Natural killer cell (primary cell): ENCODE measurements at regions of chr9 and their contacts with region 1.

Region 1: DNA sequence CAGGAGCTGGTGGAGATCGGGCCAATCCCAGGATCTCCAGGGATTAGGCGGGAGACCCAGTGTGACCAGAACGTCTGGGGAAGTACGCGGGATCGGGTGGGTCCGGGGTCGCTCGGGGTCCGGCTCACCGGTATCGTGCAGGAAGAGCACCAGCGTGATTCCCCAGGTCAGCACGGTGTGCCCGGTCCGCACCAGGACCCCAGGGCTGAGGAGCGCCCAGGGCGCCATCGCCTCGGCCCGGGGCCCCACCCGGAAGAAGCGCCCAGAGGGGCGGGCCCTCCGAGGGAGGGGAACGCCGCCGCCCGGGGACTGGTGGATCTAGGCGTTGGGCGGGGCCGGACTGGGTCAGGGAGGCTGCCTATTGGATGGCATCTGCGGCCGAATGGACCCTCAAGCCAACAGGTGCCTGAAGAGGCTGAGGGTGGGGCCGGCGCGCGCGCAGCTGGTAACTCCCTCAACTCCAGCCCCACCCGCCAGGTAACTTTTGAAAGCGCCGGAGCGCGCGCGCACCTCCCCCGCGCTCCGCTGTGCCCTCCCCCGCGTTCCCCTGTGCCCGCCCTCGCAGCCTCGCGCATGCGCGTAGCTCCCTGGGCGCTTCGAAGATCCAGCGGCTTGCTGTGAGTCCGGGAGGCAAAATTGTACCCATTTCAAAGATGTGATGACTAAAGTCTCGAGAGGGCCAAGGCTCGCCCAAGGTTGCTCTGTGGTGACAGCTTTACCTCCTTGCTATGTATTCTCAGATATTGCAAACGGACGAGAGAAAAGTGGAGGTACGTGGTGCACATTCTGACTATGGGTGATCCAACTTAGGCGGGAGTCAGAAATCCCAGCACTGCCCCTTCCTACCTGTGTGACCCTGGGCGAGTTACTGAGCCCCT is at the start of gene ZDHHC12:
- DNase-seq: peak; percentile 97 to 99
- ATAC-seq: peak; percentile 95 to 99 (median 96)
- H3K4me3 ChIP-seq: peak within 1 kb of the TSS; percentile 75
- H3K4me3 Mint-ChIP-seq: peak within 1 kb of the TSS; percentile 93
- H3K27ac ChIP-seq: peak within 1 kb of the TSS; percentile 78
- H3K27ac Mint-ChIP-seq: peak within 1 kb of the TSS; percentile 86 to 94
- H3K4me1 ChIP-seq: peaks cover 25% of the 10 kb centered on the region
- H3K4me1 Mint-ChIP-seq: peaks cover 26 to 35% of the 10 kb centered on the region in 2 donors
- H3K27me3 ChIP-seq: no peaks in the 10 kb centered on the region
- H3K27me3 Mint-ChIP-seq: no peaks in the 10 kb centered on the region
- CTCF ChIP-seq: no peak
- total RNA-seq, gene ZDHHC12: 26.1 to 37.1 (median 28.6) TPM

Region 2: GRCh38 chr9:128656416-128657343 is 67.4 kb before region 1 on chr9 and contains the start of gene DYNC2I2:
- intact Hi-C with region 1: loop called (anchors 1 kb)
- DNase-seq: peak; percentile 92 to 99
- ATAC-seq: peak; percentile 96 to 97 (median 96)
- H3K4me3 ChIP-seq: peak within 1 kb of the TSS; percentile 54
- H3K4me3 Mint-ChIP-seq: peak within 1 kb of the TSS; percentile 92
- H3K27ac ChIP-seq: peak within 1 kb of the TSS; percentile 91
- H3K27ac Mint-ChIP-seq: peak within 1 kb of the TSS; percentile 97
- H3K4me1 ChIP-seq: peaks cover 14% of the 10 kb centered on the region
- H3K4me1 Mint-ChIP-seq: peaks cover 0 to 8% of the 10 kb centered on the region in 2 donors
- H3K27me3 ChIP-seq: no peaks in the 10 kb centered on the region
- H3K27me3 Mint-ChIP-seq: no peaks in the 10 kb centered on the region
- CTCF ChIP-seq: no peak
- total RNA-seq, gene DYNC2I2: 5.2 to 6.3 (median 5.5) TPM

Region 3: DNA sequence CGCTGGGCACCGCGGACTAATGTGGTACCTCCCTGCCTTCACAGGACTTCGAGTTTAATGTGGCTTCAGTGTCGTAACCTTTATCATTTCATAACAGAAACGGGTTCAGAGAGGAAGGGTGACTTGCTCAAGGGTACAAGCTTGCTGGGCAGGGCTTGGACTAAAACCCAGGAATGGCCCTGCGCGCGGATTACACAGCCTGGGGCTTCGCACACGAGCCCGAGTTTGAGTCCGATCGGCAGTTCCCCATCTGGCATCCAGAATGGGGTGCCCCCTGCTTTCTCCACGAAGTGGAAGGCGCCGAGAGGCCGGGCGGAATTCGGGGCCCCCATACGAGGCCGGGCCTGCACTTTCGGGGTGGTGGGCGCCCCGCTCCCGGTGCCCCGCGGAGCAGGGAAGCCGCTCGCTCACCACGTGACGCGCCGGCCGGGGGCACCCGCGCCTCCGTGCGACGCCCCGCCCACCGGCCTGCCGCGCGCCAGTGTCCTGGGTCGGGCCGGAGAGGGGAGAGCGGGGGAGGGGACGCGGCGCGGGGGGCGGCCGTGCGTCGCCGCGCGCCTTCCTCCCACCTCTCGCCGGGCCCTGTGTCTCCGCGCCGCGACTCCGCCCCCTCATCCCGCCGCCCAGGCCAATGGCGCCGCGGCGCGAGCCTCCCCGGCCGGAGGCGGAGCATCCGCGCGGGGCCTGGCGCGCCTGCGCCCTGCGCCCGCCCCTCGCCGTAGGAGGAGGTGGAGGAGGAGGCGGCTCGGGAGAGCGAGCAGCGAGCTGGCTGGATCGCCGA is 35.4 kb before region 1 on chr9 and contains the start of gene SET:
- intact Hi-C with region 1: loop called (anchors 1 kb)
- DNase-seq: peak; percentile 92 to 97
- ATAC-seq: peak; percentile 77 to 92 (median 84)
- H3K4me3 ChIP-seq: peak within 1 kb of the TSS; percentile 66
- H3K4me3 Mint-ChIP-seq: peak within 1 kb of the TSS; percentile 99
- H3K27ac ChIP-seq: peak within 1 kb of the TSS; percentile 97
- H3K27ac Mint-ChIP-seq: peak within 1 kb of the TSS; percentile 89 to 96
- H3K4me1 ChIP-seq: peaks cover 53% of the 10 kb centered on the region
- H3K4me1 Mint-ChIP-seq: peaks cover 62 to 70% of the 10 kb centered on the region in 2 donors
- H3K27me3 ChIP-seq: no peaks in the 10 kb centered on the region
- H3K27me3 Mint-ChIP-seq: no peaks in the 10 kb centered on the region
- CTCF ChIP-seq: no peak
- total RNA-seq, gene SET: 331 to 341 (median 334) TPM

Region 4: GRCh38 chr9:128771745-128772519 is 47.8 kb after region 1 on chr9 and contains the start of gene ZER1:
- intact Hi-C with region 1: loop called (anchors 5 kb)
- DNase-seq: peak; percentile 95 to 96
- ATAC-seq: peak; percentile 90 to 97 (median 93)
- H3K4me3 ChIP-seq: peak within 1 kb of the TSS; percentile 99
- H3K4me3 Mint-ChIP-seq: peak within 1 kb of the TSS; percentile 97
- H3K27ac ChIP-seq: peak within 1 kb of the TSS; percentile 95
- H3K27ac Mint-ChIP-seq: peak within 1 kb of the TSS; percentile 92 to 99
- H3K4me1 ChIP-seq: peaks cover 25% of the 10 kb centered on the region
- H3K4me1 Mint-ChIP-seq: peaks cover 28 to 34% of the 10 kb centered on the region in 2 donors
- H3K27me3 ChIP-seq: no peaks in the 10 kb centered on the region
- H3K27me3 Mint-ChIP-seq: peaks cover 0 to 5% of the 10 kb centered on the region in 2 donors
- CTCF ChIP-seq: no peak
- total RNA-seq, gene ZER1: 35.0 to 37.4 (median 35.2) TPM

Region 5: DNA sequence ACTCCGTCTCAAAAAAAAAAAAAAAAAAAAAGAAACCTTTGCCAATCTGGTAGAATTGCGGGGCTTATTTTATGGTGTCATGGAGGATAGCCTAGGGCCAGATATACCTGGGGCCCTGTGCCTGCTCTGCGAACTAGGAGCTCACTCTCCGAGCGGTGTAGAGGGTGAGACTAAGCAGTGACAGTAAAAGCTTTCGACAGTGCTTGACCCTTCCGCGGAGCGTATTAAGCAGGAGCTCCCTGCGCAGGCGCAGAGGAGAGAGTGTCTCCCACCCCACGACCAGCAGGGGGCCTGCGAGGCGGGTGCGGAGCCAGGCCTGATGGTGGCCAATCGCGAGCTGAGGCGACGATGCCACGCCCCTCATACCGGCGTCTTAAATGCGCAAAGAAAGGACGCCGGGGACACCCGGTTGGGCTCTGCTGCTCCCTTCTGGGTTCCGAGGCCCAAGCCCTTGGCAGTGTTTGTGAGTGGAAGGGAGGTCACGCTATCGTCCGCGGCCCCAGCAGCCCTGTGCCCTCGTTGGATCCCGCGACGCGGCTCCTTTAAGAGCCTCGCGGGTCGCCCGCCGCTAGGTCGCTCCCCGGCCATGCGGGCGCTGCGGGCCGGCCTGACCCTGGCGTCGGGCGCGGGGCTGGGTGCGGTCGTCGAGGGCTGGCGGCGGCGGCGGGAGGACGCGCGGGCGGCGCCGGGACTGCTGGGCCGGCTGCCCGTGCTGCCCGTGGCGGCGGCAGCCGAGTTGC is 94.2 kb after region 1 on chr9 and contains the start of gene ENDOG:
- intact Hi-C with region 1: loop called (anchors 2 kb)
- DNase-seq: peak; percentile 98 to 99
- ATAC-seq: peak; percentile 95 to 98 (median 97)
- H3K4me3 ChIP-seq: peak within 1 kb of the TSS; percentile 69
- H3K4me3 Mint-ChIP-seq: peak within 1 kb of the TSS; percentile 87
- H3K27ac ChIP-seq: peak within 1 kb of the TSS; percentile 64
- H3K27ac Mint-ChIP-seq: peak within 1 kb of the TSS; percentile 59 to 79
- H3K4me1 ChIP-seq: peaks cover 19% of the 10 kb centered on the region
- H3K4me1 Mint-ChIP-seq: peaks cover 18 to 25% of the 10 kb centered on the region in 2 donors
- H3K27me3 ChIP-seq: no peaks in the 10 kb centered on the region
- H3K27me3 Mint-ChIP-seq: no peaks in the 10 kb centered on the region
- CTCF ChIP-seq: peak; percentile 98
- total RNA-seq, gene ENDOG: 6.7 to 12.5 (median 8.3) TPM